CD8-positive, alpha-beta T cell (primary cell): ENCODE measurements at regions of chr10 and their contacts with region 1.

Region 1: GRCh38 chr10:96896884-96897589 is 64.9 kb downstream of the LCOR start:
- DNase-seq: no peak
- ATAC-seq: no peak
- H3K4me3 ChIP-seq: no peak overlapping the region
- H3K4me3 Mint-ChIP-seq: no peak overlapping the region
- H3K27ac ChIP-seq: no peak overlapping the region
- H3K27ac Mint-ChIP-seq: no peak overlapping the region
- H3K4me1 ChIP-seq: peaks cover 6% of the 10 kb centered on the region
- H3K4me1 Mint-ChIP-seq: peaks cover 54% of the 10 kb centered on the region
- H3K27me3 ChIP-seq: no peaks in the 10 kb centered on the region
- H3K27me3 Mint-ChIP-seq: no peaks in the 10 kb centered on the region
- CTCF ChIP-seq: no peak

Region 2: GRCh38 chr10:96772194-96772593 is 124.8 kb before region 1 on chr10:
- CTCF ChIA-PET with region 1: no interaction called
- POLR2A ChIA-PET with region 1: no interaction called
- intact Hi-C with region 1: no loop called
- DNase-seq: no peak
- ATAC-seq: no peak
- H3K4me3 ChIP-seq: no peak overlapping the region
- H3K4me3 Mint-ChIP-seq: no peak overlapping the region
- H3K27ac ChIP-seq: no peak overlapping the region
- H3K27ac Mint-ChIP-seq: no peak overlapping the region
- H3K4me1 ChIP-seq: no peaks in the 10 kb centered on the region
- H3K4me1 Mint-ChIP-seq: no peaks in the 10 kb centered on the region
- H3K27me3 ChIP-seq: no peaks in the 10 kb centered on the region
- H3K27me3 Mint-ChIP-seq: no peaks in the 10 kb centered on the region
- CTCF ChIP-seq: no peak

Region 3: GRCh38 chr10:96814264-96814663 is 82.8 kb before region 1 on chr10:
- CTCF ChIA-PET with region 1: no interaction called
- POLR2A ChIA-PET with region 1: no interaction called
- intact Hi-C with region 1: no loop called
- DNase-seq: no peak
- ATAC-seq: no peak
- H3K4me3 ChIP-seq: no peak overlapping the region
- H3K4me3 Mint-ChIP-seq: no peak overlapping the region
- H3K27ac ChIP-seq: no peak overlapping the region
- H3K27ac Mint-ChIP-seq: no peak overlapping the region
- H3K4me1 ChIP-seq: no peaks in the 10 kb centered on the region
- H3K4me1 Mint-ChIP-seq: no peaks in the 10 kb centered on the region
- H3K27me3 ChIP-seq: no peaks in the 10 kb centered on the region
- H3K27me3 Mint-ChIP-seq: peaks cover 11% of the 10 kb centered on the region
- CTCF ChIP-seq: no peak

Region 4: DNA sequence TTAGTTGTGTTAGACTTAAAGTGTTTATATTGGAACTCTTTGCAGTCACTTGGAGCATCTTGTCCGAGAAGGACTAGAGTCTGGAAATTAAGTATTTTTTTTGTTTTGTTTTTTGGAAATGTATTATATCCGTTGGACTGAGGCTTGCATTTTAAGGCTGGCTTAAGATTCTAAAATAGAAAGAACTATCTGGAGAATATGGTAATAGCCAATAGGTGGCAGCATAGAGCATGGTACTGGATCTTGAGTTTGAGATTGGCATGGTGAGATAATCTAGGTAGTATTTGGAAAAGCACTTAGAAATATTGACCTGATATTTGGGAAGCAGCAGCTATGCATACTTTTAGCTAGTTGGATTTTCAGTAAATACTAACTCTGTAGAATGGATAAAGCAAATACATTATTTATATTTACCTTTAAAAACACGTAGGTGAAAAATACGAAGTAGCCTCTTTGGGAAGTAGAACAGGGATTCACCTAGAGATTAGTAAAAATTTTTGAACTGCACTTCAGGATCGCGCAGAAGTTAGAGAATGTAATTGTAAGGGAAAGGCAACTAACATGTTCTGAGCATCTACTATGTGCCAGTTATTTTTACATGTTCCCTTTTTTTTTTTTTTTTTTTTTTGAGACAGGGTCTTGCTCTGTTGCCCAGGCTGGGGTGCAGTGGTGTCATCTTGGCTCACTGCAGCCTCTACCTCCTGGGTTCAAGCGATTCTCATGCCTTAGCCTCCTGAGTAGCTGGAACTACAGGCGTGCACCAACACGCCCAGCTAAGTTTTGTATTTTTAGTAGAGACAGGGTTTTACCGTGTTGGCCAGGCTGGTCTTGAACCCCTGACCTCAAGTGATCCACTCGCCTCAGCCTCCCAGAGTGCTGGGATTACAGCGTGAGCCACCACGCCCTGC is 13.7 kb after region 1 on chr10:
- CTCF ChIA-PET with region 1: interaction called, 10 read pairs
- POLR2A ChIA-PET with region 1: no interaction called
- intact Hi-C with region 1: no loop called
- DNase-seq: peak in 3 of 9 experiments; percentile 9 to 65 (median 56)
- ATAC-seq: peak; percentile 66
- H3K4me3 ChIP-seq: no peak overlapping the region
- H3K4me3 Mint-ChIP-seq: no peak overlapping the region
- H3K27ac ChIP-seq: no peak overlapping the region
- H3K27ac Mint-ChIP-seq: no peak overlapping the region
- H3K4me1 ChIP-seq: no peaks in the 10 kb centered on the region
- H3K4me1 Mint-ChIP-seq: peaks cover 33% of the 10 kb centered on the region
- H3K27me3 ChIP-seq: no peaks in the 10 kb centered on the region
- H3K27me3 Mint-ChIP-seq: no peaks in the 10 kb centered on the region
- CTCF ChIP-seq: peak; percentile 88

Region 5: DNA sequence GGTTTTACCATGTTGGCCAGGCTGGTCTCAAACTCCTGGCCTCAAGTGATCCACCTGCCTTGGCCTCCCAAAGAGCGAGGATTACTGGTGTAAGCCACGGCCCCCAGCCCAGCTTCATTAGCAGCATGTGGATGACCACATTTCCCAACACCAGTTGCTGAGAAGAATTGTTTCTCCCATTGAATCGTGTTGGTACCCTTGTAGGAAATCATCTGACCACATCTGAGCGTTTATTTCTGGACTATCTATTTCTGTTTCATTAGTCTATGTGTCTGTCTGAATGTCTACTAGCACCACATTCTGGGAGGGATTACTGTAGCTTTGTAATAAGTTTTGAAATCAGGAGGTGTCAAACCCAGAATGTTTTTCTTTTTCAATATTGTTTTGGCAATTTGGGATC is 24.6 kb after region 1 on chr10:
- CTCF ChIA-PET with region 1: no interaction called
- POLR2A ChIA-PET with region 1: no interaction called
- intact Hi-C with region 1: no loop called
- DNase-seq: no peak
- ATAC-seq: no peak
- H3K4me3 ChIP-seq: no peak overlapping the region
- H3K4me3 Mint-ChIP-seq: no peak overlapping the region
- H3K27ac ChIP-seq: no peak overlapping the region
- H3K27ac Mint-ChIP-seq: no peak overlapping the region
- H3K4me1 ChIP-seq: no peaks in the 10 kb centered on the region
- H3K4me1 Mint-ChIP-seq: peaks cover 52% of the 10 kb centered on the region
- H3K27me3 ChIP-seq: no peaks in the 10 kb centered on the region
- H3K27me3 Mint-ChIP-seq: no peaks in the 10 kb centered on the region
- CTCF ChIP-seq: no peak

Region 6: DNA sequence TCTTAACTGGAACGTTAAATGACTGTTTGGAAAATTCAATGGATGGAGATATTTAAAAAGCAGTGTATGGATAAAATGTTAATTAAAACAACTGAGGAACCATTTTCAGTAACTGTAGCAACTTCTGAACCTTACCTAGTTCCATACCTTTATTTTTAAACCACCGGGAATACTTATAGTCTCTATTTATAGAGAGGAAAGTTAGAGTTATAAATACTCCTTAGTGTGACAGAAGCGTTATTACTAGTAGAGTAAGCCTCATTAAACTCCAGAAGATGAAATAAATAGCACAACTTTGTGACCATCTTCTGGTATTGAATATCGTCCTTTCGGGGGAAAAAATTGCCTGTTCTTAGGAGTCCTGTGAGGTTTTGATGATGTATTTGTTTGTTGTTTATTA is 50.0 kb after region 1 on chr10:
- CTCF ChIA-PET with region 1: no interaction called
- POLR2A ChIA-PET with region 1: no interaction called
- intact Hi-C with region 1: loop called in 1 of 2 experiments (anchors 1 kb)
- DNase-seq: no peak
- ATAC-seq: no peak
- H3K4me3 ChIP-seq: no peak overlapping the region
- H3K4me3 Mint-ChIP-seq: no peak overlapping the region
- H3K27ac ChIP-seq: no peak overlapping the region
- H3K27ac Mint-ChIP-seq: no peak overlapping the region
- H3K4me1 ChIP-seq: peaks cover 10% of the 10 kb centered on the region
- H3K4me1 Mint-ChIP-seq: peaks cover 37% of the 10 kb centered on the region
- H3K27me3 ChIP-seq: no peaks in the 10 kb centered on the region
- H3K27me3 Mint-ChIP-seq: no peaks in the 10 kb centered on the region
- CTCF ChIP-seq: no peak